Common myeloid progenitor, CD34-positive (primary cell): ENCODE measurements at regions of chr16 and their contacts with region 1.

Region 1: GRCh38 chr16:28298511-28298878 is 6.2 kb downstream of the SBK1 start:
- DNase-seq: no peak
- H3K4me3 ChIP-seq: no peak overlapping the region
- H3K27ac ChIP-seq: no peak overlapping the region
- H3K4me1 ChIP-seq: peaks cover 0 to 8% (median 1%) of the 10 kb centered on the region in 4 experiments
- H3K27me3 ChIP-seq: peaks cover 0 to 11% (median 5%) of the 10 kb centered on the region in 5 experiments

Region 2: DNA sequence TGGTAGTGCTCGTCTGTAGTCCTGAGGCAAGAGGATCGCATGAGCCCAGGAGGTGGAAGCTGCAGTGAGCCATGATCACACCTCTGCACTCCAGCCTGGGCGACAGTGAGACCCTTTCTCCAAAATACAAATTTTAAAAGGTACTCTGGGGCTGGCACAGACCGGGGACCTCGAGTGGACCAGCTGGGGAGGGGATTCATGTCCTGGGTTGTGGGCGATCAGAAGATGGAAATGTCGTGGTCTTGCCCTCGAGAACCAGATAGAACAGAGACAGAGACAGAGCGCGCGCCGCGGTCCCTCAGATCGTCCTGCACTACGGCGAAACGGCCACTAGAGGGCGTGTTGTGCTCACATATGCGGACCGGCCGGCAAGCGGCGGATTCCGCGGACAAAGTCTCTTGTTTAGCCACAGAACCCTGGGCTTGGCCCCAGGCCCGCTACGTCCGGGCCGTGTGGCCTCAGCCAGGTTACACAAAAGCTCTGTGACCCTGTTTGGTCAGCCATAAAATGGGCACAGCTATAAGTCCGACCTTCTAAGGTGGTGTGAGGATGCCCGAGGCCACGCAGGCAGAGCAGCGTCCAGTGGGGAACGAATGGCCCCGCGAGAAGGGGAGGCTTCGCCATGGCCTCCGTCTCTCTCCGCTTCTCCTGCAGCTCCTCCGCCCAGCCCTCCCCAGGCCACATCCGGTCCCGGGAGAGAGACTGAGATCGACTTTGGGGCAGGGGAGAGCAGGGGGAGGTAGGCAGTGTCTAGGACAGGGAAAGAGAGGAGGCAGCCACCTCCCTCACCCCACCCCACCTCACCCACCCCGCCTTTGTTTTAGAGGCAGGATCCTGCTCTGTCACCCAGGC is 20.7 kb before region 1 on chr16:
- CTCF ChIA-PET with region 1: interaction called, 10 read pairs
- POLR2A ChIA-PET with region 1: no interaction called
- DNase-seq: peak; percentile 69 to 83 (median 80)
- H3K4me3 ChIP-seq: peak overlapping the region in 6 of 7 experiments; percentile 15 to 81 (median 62)
- H3K27ac ChIP-seq: no peak overlapping the region
- H3K4me1 ChIP-seq: peaks cover 0 to 10% (median 6%) of the 10 kb centered on the region in 4 experiments
- H3K27me3 ChIP-seq: peaks cover 0 to 10% (median 4%) of the 10 kb centered on the region in 5 experiments

Region 3: DNA sequence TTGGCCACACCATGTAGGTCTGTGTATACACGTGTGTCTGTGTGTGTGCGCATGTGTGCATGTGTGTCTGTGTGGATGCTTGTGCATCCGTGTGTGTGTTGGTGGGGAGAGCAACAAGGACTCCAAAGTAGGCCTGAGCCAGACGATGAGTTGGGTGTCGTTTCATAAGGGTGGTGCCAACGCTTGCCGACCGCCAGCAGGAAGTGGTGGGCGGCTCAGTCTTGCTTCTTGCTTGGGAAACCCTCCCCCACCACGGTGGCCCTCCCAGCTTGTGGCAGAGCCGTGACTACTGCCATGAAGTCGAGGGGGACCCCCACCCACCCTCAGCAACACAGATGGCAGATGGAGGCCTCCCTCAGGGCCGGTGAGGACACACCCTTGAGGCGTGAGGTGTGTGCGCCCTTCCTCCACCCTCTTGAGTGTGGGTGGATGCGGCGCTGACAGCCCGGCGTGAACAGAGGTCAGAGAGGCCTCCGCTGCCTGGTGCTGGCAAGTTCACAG is 11.4 kb after region 1 on chr16:
- CTCF ChIA-PET with region 1: interaction called, 10 read pairs
- POLR2A ChIA-PET with region 1: no interaction called
- DNase-seq: peak in 2 of 3 donors; percentile 68 to 81
- H3K4me3 ChIP-seq: no peak overlapping the region
- H3K27ac ChIP-seq: no peak overlapping the region
- H3K4me1 ChIP-seq: peaks cover 0 to 4% (median 2%) of the 10 kb centered on the region in 4 experiments
- H3K27me3 ChIP-seq: no peaks in the 10 kb centered on the region

Region 4: DNA sequence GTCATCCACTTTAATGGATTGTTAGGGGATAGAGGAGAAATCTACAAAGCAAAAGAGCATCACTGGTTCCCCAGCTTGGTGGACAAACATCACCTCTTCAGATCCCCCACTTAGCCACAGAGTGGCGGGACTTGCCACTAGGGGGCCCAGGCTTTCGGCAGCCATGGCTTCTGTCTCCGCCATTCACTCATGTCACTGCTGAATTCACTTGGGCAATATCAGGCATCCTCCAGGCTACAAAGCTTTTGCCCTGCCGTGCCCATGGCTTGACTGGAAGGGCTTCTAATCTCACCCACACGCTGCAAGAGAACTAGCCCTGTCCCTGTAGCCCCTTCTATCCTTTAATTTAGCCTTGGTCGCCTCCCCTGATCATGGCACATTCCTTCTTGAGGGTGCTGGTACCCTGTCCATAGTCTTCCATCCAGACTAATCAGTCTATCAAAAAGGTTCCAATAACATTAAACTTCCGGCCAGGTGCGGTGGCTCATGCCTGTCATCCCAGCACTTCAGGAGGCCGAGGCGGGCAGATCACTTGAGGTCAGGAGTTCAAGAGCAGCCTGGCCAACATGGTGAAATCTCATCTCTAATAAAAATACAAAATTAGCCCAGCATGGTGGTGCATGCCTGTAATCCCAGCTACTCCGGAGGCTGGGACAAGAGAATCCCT is 28.6 kb after region 1 on chr16:
- CTCF ChIA-PET with region 1: interaction called, 10 read pairs
- POLR2A ChIA-PET with region 1: no interaction called
- DNase-seq: peak; percentile 65 to 84 (median 81)
- H3K4me3 ChIP-seq: no peak overlapping the region
- H3K27ac ChIP-seq: no peak overlapping the region
- H3K4me1 ChIP-seq: no peaks in the 10 kb centered on the region
- H3K27me3 ChIP-seq: no peaks in the 10 kb centered on the region